Prostate gland (tissue), 2 donors: ENCODE measurements at regions of chr6 and their contacts with region 1.

Region 1: DNA sequence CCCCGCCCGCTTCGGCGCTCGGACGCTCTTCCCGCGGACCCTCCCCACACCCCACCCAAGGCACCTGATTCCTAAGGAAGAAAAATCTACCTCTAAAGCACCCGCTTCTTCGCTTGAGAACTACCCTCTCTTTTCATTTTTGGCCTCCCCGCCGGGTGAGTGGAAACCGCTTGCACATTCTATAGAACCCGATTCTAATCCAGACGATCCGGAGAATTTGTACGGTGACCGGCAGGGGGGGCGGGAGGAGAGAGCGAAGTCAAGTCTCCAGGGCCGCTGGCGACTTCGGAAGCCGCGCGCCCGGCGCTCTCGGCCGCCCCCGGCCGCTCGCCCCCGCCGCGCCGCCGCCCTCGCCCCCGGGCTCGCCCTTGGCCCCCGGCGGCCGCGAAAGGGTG is at the start of gene RBM24:
- DNase-seq: peak; percentile 40
- H3K4me3 ChIP-seq: peak within 1 kb of the TSS; percentile 59 to 70
- H3K27ac ChIP-seq: peak within 1 kb of the TSS; percentile 76 to 78
- H3K4me1 ChIP-seq: no peaks in the 10 kb centered on the region
- H3K27me3 ChIP-seq: no peaks in the 10 kb centered on the region
- CTCF ChIP-seq: peak in 1 of 4 experiments; percentile 37
- POLR2A ChIP-seq: no peak
- total RNA-seq, gene RBM24: 4.4 to 13.8 TPM

Region 2: DNA sequence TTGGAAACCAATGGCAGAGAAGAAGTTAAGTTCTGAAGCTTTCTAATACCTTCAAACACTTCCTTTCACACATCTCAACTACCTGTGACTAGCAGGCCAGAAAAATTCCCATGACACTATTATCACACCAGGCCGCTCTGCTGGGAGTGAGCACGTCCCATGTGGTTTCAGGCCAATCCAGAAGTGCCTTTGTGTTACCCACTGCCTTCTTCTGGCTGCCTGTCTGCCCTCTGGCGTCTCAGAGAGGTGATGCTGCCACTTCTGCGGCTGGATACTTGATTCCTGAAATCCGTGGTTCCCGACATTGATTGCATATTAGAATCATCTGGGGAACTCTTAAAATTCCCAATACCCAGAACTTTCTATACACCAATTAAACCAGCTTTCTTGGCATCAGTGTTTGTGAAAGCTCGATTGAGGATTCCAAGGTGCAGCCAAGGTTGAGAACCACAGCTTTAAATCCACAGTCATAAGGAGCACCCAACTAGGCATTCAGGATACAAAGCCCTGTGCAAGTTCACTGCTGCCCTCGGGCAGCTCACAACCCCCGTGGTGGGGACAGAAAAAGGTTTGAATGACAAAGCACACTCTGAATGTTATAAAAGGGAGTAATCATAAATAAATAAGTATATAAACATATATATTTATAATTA is 113.6 kb before region 1 on chr6:
- intact Hi-C with region 1: loop called (anchors 10 kb)
- DNase-seq: no peak
- H3K4me3 ChIP-seq: no peak overlapping the region
- H3K27ac ChIP-seq: no peak overlapping the region
- H3K4me1 ChIP-seq: no peaks in the 10 kb centered on the region
- H3K27me3 ChIP-seq: no peaks in the 10 kb centered on the region
- CTCF ChIP-seq: peak in 2 of 4 experiments; percentile 19 to 26
- POLR2A ChIP-seq: no peak

Region 3: DNA sequence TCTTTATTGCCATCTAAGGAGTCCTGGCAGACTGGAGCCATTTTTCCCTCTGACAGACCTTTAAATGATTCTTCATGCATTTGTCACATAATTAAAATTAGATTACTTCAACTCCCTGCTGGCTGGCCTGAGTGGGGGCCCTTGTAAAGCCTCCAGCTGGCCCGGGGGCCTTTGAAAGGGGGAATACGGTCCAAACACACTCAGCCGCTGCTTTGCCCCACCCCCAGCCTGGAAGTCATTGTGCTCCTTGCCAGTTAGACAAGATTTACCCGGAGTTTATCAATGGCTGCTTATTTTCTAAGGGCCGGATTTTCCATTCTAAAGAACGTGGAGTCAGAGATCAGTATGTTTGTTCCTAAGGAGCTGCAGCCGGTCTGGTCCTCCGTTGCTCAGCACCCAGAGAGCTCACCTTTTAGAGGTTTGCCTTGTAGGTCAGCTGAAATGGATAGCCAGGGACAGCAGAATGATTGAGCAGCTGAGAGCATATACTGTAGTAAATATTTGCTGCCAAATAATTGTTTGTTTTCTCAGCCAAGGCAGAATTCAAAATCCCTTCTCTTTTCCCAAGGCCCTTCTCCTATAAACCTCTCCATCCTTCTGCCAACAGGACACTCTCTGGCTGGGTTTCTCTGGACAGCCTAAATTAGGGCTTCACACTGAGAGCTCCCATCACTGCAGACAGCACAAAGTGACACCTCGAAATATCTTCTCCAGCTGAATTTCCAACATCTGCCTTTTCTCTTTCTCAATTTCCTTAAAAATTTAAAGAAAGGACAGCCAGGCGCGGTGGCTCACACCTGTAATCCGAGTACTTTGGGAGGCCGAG is 68.3 kb before region 1 on chr6:
- intact Hi-C with region 1: loop called (anchors 5 kb)
- DNase-seq: no peak
- H3K4me3 ChIP-seq: no peak overlapping the region
- H3K27ac ChIP-seq: peak overlapping the region in 1 of 2 donors; percentile 39
- H3K4me1 ChIP-seq: no peaks in the 10 kb centered on the region
- H3K27me3 ChIP-seq: no peaks in the 10 kb centered on the region
- CTCF ChIP-seq: no peak
- POLR2A ChIP-seq: no peak

Region 4: GRCh38 chr6:17392978-17393891 is 112.1 kb after region 1 on chr6 and contains the start of gene CAP2:
- intact Hi-C with region 1: loop called (anchors 2 kb)
- DNase-seq: peak; percentile 42
- H3K4me3 ChIP-seq: peak within 1 kb of the TSS; percentile 75 to 76
- H3K27ac ChIP-seq: peak within 1 kb of the TSS; percentile 77 to 79
- H3K4me1 ChIP-seq: no peaks in the 10 kb centered on the region
- H3K27me3 ChIP-seq: no peaks in the 10 kb centered on the region
- CTCF ChIP-seq: no peak
- POLR2A ChIP-seq: no peak
- total RNA-seq, gene CAP2: 8.7 to 10.0 TPM

Region 5: DNA sequence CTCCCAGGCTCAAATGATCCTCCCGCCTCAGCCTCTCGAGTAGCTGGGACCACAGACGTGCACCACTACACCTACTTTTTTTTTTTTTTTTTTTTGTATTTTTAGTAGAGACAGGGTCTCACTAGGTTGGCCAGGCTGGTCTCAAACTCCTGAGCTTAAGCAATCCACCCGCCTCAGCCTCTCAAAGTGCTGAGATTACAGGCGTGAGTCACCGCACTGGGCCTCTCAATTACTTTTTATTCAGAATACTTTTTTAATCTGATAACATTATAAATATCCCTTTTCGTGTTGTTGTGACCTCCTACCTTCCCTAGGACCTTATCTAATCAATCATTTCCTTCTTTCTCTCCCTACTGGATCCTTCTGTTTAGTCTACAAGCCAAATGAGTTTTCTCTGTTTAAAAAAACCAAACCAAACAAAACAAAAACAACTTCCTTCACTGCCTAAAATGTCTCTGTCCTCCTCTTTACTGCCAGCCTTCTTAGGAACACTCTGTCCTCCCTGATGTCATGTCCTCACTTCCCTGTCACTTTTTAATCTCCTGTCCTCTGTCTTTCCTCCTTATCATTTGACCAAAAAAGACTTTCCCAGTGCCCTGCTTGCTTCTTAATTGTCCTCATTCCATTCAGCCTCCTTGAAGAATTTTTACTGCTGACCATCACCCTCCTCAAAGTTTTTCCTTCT is 197.3 kb after region 1 on chr6:
- intact Hi-C with region 1: loop called (anchors 5 kb)
- DNase-seq: no peak
- H3K4me3 ChIP-seq: no peak overlapping the region
- H3K27ac ChIP-seq: peak overlapping the region; percentile 55 to 58
- H3K4me1 ChIP-seq: no peaks in the 10 kb centered on the region
- H3K27me3 ChIP-seq: no peaks in the 10 kb centered on the region
- CTCF ChIP-seq: no peak
- POLR2A ChIP-seq: no peak

Region 6: DNA sequence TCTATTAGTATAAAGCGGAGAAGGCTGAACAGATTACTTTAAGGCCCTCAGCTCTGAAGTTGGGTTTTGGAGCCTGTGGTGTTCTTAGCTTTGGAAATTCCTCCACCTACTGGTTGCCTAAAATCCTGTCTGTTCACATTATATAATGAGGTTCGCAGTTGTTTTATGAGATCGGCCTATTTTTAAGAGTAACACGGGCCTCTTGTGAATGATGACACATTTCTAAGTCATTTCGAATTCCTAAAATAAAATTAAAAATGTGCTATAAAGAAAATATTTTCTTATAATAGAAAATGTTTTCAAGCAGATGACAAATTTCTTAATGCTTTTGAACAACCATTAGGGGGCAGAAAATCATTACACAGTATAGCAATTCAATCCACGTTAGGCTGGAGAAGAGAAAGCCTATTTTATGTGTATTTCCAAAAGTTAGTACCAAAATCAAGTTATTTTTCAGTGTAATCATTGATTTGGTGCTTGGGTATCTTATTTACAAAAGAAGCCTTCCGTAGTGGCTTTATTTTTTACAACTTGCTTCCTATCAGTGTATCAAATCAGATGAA is 303.2 kb after region 1 on chr6:
- intact Hi-C with region 1: loop called (anchors 5 kb)
- DNase-seq: peak; percentile 55
- H3K4me3 ChIP-seq: no peak overlapping the region
- H3K27ac ChIP-seq: peak overlapping the region; percentile 31 to 50
- H3K4me1 ChIP-seq: no peaks in the 10 kb centered on the region
- H3K27me3 ChIP-seq: no peaks in the 10 kb centered on the region
- CTCF ChIP-seq: peak; percentile 83 to 93 (median 86)
- POLR2A ChIP-seq: no peak